Right ventricle myocardium inferior (tissue), 1 donor: ENCODE measurements at regions of chr4 and their contacts with region 1.

Region 1: DNA sequence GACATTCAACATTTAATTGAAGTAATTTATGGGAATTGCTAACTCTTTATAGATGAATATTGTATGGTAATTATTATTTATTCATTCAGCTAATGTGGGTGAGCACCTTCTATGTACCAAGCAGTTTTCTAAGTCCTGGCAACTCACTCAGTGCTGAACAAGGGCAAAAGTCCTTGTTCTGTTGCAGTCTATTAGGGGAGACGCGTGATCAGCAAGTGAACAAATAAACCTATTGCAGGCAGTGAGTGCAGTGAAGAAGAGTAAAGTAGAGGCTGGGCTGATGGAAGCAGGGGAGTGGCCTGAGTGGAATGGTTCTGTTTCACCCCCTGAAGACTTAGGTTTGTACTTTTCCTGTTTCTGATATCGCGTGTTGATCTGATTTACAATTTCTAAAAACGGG is 214.3 kb downstream of the RAPGEF2 start:
- DNase-seq: no peak
- ATAC-seq: no peak

Region 2: DNA sequence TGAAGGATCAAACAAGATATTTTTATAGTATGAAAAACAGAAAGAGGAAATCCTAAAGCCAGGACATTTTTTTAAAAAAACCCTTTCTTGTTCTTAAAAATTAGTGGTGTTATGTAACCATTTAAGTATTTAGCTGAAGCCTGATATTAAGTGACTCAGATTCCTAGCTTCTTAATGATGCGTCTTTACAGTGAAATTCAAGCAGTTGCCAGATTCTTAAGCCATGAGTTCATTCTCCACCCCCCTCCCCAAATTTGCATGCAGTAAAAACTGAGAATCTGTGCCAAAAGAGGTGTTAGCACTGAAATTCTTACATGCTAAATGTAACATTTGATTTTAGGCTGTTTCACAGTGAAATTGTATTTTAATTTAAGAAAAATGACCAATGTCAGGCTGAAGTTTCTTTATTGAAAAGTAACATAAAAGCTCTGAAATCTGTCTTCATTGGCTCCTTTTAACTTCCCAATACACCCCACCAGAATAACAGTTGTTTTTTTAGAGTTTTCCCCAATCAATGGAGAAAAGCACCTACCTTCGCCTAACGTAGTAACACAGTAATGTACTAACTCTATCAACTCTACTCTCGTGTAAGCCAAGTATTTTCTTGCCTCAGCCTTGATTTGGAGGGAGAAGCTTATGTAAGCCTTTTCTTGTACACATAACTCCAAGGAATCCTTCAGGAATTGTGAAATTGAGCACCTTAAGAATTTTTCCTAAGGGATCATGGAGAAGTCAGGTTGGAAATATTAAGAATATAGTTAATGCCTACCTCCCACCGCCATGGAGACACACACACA is 33.3 kb before region 1 on chr4:
- intact Hi-C with region 1: loop called (anchors 5 kb)
- DNase-seq: no peak
- ATAC-seq: no peak